ENCODE measurements at regions of chr1 and their contacts with region 1.

Region 1: GRCh38 chr1:62407405-62408009 is 29.3 kb upstream of the USP1 start:
- DNase-seq: no peak
- H3K4me3 ChIP-seq: no peak overlapping the region
- H3K27ac ChIP-seq: no peak overlapping the region
- H3K4me1 ChIP-seq: peaks cover 0 to 5% (median 0%) of the 10 kb centered on the region in 4 donors
- H3K27me3 ChIP-seq: no peaks in the 10 kb centered on the region
- CTCF ChIP-seq: peak; percentile 63 to 77 (median 72)
- EP300 ChIP-seq: no peak
- POLR2A ChIP-seq: no peak

Region 2: DNA sequence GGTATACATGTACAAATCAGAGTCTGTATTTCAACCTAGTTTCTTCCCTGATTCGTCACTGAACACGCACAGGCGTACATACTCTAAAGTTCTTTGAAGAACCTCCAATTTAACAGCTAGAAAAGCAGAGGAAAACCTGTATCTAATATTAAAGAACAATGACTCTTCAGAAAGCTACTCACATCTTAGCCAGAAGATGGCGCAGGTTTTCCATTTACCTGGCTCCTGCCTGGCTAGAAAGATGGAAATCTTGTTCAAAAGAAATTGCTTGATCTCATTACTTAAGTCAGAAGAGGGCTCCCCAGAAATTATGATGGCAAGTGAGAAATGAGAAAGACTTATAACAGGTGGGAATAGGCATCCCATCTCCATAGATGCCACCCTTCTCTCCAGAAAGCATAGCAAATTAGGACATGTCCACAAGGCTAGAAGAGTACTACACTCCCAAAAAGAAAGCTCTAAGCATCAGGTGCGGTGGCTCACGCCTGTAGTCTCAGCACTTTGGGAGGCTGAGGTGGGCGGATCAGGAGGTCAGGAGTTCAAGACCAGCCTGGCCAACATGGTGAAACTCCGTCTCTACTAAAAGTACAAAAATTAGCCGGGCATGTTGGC is 231.8 kb before region 1 on chr1:
- in situ Hi-C with region 1: loop called (anchors 5 kb)
- intact Hi-C with region 1: loop called (anchors 5 kb)
- DNase-seq: peak; percentile 33
- H3K4me3 ChIP-seq: no peak overlapping the region
- H3K27ac ChIP-seq: no peak overlapping the region
- H3K4me1 ChIP-seq: peaks cover 0 to 10% (median 8%) of the 10 kb centered on the region in 4 donors
- H3K27me3 ChIP-seq: no peaks in the 10 kb centered on the region
- CTCF ChIP-seq: peak; percentile 60 to 77 (median 75)
- EP300 ChIP-seq: no peak
- POLR2A ChIP-seq: no peak

Region 3: DNA sequence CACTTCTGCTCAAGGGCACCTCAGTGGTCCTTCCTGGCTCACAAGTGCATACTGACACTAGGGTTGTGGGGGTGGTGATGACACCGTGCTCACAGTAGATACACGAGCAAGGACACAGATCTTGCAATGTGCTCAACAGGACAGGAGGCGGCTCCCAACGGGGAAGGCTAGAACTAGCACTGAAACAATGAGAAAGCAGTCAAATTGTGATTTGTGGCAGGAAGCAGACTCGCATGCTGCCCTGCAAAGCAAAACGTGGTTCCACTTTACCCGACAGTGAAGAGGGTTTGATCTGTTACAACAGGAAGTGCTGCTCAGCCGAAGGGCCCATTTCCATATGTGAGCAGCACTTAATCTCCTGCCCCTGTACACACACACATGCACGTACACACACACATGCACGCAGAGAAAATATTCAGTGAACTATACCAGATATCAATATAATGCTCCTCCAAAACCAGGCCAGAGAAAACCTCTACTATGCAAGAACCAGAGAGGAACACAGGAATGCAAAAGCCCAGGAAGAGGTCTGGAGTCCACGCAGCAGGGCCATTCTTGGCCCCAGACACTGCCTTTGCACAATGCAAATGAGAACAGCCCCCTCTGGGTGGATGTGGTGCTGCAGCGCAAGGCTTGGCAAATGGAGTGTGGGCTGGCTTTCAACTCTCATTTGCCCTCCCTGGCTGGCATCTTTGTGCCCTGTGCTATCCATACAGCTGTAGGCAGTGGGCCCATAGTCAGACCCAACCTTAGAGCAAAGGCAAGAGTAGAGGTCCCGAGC is 135.4 kb before region 1 on chr1:
- in situ Hi-C with region 1: no loop called
- intact Hi-C with region 1: no loop called
- DNase-seq: no peak
- H3K4me3 ChIP-seq: no peak overlapping the region
- H3K27ac ChIP-seq: no peak overlapping the region
- H3K4me1 ChIP-seq: no peaks in the 10 kb centered on the region
- H3K27me3 ChIP-seq: no peaks in the 10 kb centered on the region
- CTCF ChIP-seq: no peak
- EP300 ChIP-seq: no peak
- POLR2A ChIP-seq: no peak

Region 4: GRCh38 chr1:62544570-62544969 is 137.1 kb after region 1 on chr1:
- in situ Hi-C with region 1: no loop called
- intact Hi-C with region 1: loop called (anchors 5 kb)
- DNase-seq: no peak
- H3K4me3 ChIP-seq: no peak overlapping the region
- H3K27ac ChIP-seq: no peak overlapping the region
- H3K4me1 ChIP-seq: no peaks in the 10 kb centered on the region
- H3K27me3 ChIP-seq: no peaks in the 10 kb centered on the region
- CTCF ChIP-seq: no peak
- EP300 ChIP-seq: no peak
- POLR2A ChIP-seq: no peak

Region 5: DNA sequence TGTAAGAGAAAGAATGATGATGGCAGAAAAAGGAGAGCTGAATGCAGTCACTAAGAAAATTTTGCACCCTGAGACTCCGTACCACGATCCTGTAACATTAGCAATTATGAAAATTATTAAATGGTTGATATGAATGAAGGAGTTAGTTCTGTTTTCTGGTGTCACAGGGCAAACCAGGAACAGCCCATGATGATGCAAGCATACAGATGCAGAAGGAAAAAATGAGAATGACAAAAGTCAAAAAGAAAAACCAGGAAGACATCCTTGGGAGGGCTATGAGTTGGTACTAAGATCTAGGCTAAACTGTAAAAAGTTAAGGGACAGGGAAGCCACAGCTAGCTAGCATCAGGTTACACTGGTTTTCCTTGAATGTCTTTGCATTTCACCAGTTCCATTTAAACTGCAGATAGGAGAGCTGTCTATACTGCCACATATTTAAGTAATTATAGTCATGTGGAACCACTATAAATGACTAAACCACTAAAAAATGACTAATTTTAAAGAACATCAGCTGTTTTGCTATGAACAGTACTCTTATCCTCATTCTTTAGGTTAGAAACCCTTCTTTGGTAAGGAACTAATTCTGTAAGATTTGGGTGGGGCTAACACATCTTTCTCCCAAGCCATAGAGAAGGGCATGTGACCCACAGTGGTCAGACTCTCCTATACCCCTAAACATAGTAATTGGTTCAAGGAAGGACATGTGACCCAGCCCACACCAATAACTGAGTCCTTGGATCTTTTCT is 269.3 kb after region 1 on chr1:
- in situ Hi-C with region 1: no loop called
- intact Hi-C with region 1: no loop called
- DNase-seq: no peak
- H3K4me3 ChIP-seq: no peak overlapping the region
- H3K27ac ChIP-seq: no peak overlapping the region
- H3K4me1 ChIP-seq: peaks cover 0 to 25% (median 10%) of the 10 kb centered on the region in 4 donors
- H3K27me3 ChIP-seq: no peaks in the 10 kb centered on the region
- CTCF ChIP-seq: no peak
- EP300 ChIP-seq: no peak
- POLR2A ChIP-seq: no peak

Measured in transverse colon (tissue), 4 donors.